Activated CD4-positive, alpha-beta T cell treated with anti-CD3 and anti-CD28 coated beads, Interleukin-2, amount 10 ng/mL, durations not matched to agents 24 days and 14 days (primary cell): ENCODE measurements at regions of chr9 and their contacts with region 1.

Region 1: GRCh38 chr9:114505187-114506081 is at the start of gene WHRN:
- DNase-seq: peak; percentile 97
- H3K4me3 Mint-ChIP-seq: peak within 1 kb of the TSS; percentile 87
- H3K27ac Mint-ChIP-seq: peak within 1 kb of the TSS; percentile 82
- H3K4me1 Mint-ChIP-seq: peaks cover 17% of the 10 kb centered on the region
- H3K27me3 Mint-ChIP-seq: peaks cover 78% of the 10 kb centered on the region
- total RNA-seq, gene WHRN: 2.0 and 2.1 TPM in 2 replicates

Region 2: GRCh38 chr9:114348906-114349482 is 156.4 kb before region 1 on chr9:
- intact Hi-C with region 1: loop called (anchors 5 kb)
- DNase-seq: peak; percentile 87
- H3K4me3 Mint-ChIP-seq: peak overlapping the region; percentile 58
- H3K27ac Mint-ChIP-seq: peak overlapping the region; percentile 99
- H3K4me1 Mint-ChIP-seq: peaks cover 51% of the 10 kb centered on the region
- H3K27me3 Mint-ChIP-seq: no peaks in the 10 kb centered on the region

Region 3: GRCh38 chr9:114434878-114435311 is 70.5 kb before region 1 on chr9:
- intact Hi-C with region 1: loop called (anchors 1 kb)
- DNase-seq: peak; percentile 71
- H3K4me3 Mint-ChIP-seq: no peak overlapping the region
- H3K27ac Mint-ChIP-seq: no peak overlapping the region
- H3K4me1 Mint-ChIP-seq: peaks cover 4% of the 10 kb centered on the region
- H3K27me3 Mint-ChIP-seq: peaks cover 8% of the 10 kb centered on the region

Region 4: DNA sequence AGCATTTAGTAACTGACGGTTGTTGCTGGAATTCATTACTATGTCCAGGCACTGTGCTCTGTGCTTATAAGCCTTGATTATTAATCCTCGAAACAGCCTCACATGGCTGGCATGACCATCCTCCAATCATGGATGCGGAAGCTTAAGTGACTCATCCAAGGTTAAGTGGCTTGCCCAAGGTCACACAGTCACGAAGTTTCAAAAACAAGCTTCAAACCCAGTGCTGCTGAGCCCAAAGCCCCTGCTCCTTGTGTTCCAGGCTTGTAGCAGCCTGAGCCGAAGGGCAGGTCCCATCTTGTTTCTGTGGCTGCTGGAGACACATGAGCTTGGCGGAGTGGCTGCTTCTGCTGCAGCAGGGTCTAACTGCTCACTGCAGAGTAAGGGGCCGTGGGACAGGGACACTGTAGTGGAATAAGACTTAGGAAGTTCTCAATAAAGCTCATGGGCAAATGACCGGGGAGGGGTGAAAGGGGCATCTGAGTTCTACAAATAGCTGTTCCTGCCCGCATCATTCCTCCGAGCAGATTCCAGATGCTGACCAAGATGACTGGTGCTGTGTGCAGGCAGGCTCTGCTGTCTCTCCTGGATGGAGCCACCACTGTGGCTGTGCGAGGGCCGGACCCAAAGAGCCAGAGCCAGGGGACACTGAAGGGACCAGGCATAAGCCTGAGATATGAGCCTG is 32.5 kb before region 1 on chr9:
- intact Hi-C with region 1: no loop called
- DNase-seq: no peak
- H3K4me3 Mint-ChIP-seq: no peak overlapping the region
- H3K27ac Mint-ChIP-seq: no peak overlapping the region
- H3K4me1 Mint-ChIP-seq: peaks cover 11% of the 10 kb centered on the region
- H3K27me3 Mint-ChIP-seq: no peaks in the 10 kb centered on the region

Region 5: GRCh38 chr9:114538241-114538640 is 32.8 kb after region 1 on chr9:
- intact Hi-C with region 1: no loop called
- DNase-seq: peak; percentile 65
- H3K4me3 Mint-ChIP-seq: no peak overlapping the region
- H3K27ac Mint-ChIP-seq: no peak overlapping the region
- H3K4me1 Mint-ChIP-seq: no peaks in the 10 kb centered on the region
- H3K27me3 Mint-ChIP-seq: peaks cover 23% of the 10 kb centered on the region

Region 6: GRCh38 chr9:114587385-114588202 is 82.2 kb after region 1 on chr9 and contains the start of gene ATP6V1G1:
- intact Hi-C with region 1: loop called (anchors 1 kb)
- DNase-seq: peak; percentile 100
- H3K4me3 Mint-ChIP-seq: peak within 1 kb of the TSS; percentile 98
- H3K27ac Mint-ChIP-seq: peak within 1 kb of the TSS; percentile 99
- H3K4me1 Mint-ChIP-seq: peaks cover 43% of the 10 kb centered on the region
- H3K27me3 Mint-ChIP-seq: peaks cover 4% of the 10 kb centered on the region
- total RNA-seq, gene ATP6V1G1: 46.7 and 47.1 TPM in 2 replicates

Region 7: DNA sequence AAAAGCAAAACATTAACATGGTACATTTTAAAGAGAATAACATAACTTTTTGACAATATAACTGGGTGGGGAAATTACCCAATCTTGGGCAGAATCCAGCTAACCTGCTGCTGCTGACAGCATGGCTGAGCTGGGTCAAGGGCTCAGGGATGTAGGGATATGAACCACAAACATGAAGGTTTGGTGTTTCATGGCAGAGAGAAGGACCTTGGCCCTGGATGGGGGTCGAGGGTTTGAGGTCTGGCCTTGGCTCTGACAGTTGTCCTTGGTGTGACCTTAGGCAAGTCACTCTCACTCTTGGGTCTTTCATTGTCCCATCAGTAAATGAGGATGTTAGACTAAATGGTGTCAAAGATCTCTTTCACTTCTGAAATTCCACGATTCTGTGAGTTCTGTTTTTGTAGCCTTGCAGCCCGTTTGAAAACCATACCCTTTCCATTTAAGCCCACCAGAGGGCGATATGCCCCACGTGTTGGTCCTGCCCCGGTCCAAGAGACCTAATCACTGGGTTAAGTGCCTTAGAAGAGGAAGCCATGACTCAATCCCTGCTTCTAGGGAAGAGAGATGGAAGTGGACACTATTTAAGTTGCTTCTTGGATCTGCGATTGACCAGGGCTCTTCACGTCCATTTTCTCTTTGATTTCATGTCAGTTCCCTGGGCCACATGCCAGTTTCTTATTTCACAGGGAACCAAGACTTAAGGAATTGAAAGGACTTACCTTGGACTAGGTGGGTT is 233.3 kb after region 1 on chr9:
- intact Hi-C with region 1: no loop called
- DNase-seq: peak; percentile 91
- H3K4me3 Mint-ChIP-seq: peak overlapping the region; percentile 33
- H3K27ac Mint-ChIP-seq: peak overlapping the region; percentile 93
- H3K4me1 Mint-ChIP-seq: peaks cover 63% of the 10 kb centered on the region
- H3K27me3 Mint-ChIP-seq: no peaks in the 10 kb centered on the region

Region 8: GRCh38 chr9:114930056-114930812 is 424.8 kb after region 1 on chr9 and contains the start of gene TNFSF8:
- intact Hi-C with region 1: loop called (anchors 10 kb)
- DNase-seq: peak; percentile 94
- H3K4me3 Mint-ChIP-seq: peak within 1 kb of the TSS; percentile 90
- H3K27ac Mint-ChIP-seq: peak within 1 kb of the TSS; percentile 99
- H3K4me1 Mint-ChIP-seq: peaks cover 59% of the 10 kb centered on the region
- H3K27me3 Mint-ChIP-seq: no peaks in the 10 kb centered on the region
- total RNA-seq, gene TNFSF8: 148 and 150 TPM in 2 replicates